ENCODE measurements at regions of chrX and their contacts with region 1.

Region 1: GRCh38 chrX:1657367-1658070 is 42.7 kb downstream of the ASMT start:
- DNase-seq: peak; percentile 80
- ATAC-seq: peak; percentile 67
- H3K4me3 Mint-ChIP-seq: peak overlapping the region; percentile 93
- H3K27ac Mint-ChIP-seq: peak overlapping the region; percentile 98
- H3K4me1 Mint-ChIP-seq: peaks cover 23% of the 10 kb centered on the region
- H3K27me3 Mint-ChIP-seq: no peaks in the 10 kb centered on the region

Region 2: DNA sequence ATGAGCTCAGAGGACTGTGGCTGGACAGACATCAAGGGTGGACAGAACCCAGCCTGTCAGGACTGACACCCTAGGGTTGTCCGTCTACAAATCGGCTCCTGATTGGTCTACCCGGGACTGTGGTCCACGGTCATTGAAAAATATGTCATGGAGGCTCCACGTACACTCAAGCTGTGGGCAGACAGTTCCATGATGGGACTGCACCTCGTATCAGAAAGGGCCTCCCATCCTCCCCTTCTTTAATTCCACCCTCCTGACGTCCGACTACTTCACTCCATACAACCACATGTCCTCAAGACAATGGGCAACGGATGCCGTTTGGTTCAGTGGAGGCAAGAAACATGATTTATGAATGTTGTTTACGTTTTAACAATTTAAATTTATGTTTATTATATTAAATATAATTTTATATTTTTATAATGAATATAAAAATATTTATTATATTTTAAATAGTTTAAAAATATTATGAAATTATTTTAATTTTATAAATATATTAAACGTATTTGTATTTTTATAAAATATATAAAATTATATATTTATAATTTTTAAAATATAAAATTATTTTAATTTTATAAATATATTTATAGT is 1084.9 kb before region 1 on chrX:
- CTCF ChIA-PET with region 1: no interaction called
- POLR2A ChIA-PET with region 1: no interaction called
- intact Hi-C with region 1: loop called in 1 of 2 experiments (anchors 5 kb)
- DNase-seq: no peak
- ATAC-seq: peak; percentile 24
- H3K4me3 Mint-ChIP-seq: no peak overlapping the region
- H3K27ac Mint-ChIP-seq: no peak overlapping the region
- H3K4me1 Mint-ChIP-seq: no peaks in the 10 kb centered on the region
- H3K27me3 Mint-ChIP-seq: no peaks in the 10 kb centered on the region

Region 3: GRCh38 chrX:1516596-1517104 is 140.9 kb before region 1 on chrX:
- CTCF ChIA-PET with region 1: no interaction called
- POLR2A ChIA-PET with region 1: no interaction called
- intact Hi-C with region 1: no loop called
- DNase-seq: no peak
- ATAC-seq: no peak
- H3K4me3 Mint-ChIP-seq: no peak overlapping the region
- H3K27ac Mint-ChIP-seq: peak overlapping the region; percentile 49
- H3K4me1 Mint-ChIP-seq: peaks cover 44% of the 10 kb centered on the region
- H3K27me3 Mint-ChIP-seq: no peaks in the 10 kb centered on the region

Region 4: DNA sequence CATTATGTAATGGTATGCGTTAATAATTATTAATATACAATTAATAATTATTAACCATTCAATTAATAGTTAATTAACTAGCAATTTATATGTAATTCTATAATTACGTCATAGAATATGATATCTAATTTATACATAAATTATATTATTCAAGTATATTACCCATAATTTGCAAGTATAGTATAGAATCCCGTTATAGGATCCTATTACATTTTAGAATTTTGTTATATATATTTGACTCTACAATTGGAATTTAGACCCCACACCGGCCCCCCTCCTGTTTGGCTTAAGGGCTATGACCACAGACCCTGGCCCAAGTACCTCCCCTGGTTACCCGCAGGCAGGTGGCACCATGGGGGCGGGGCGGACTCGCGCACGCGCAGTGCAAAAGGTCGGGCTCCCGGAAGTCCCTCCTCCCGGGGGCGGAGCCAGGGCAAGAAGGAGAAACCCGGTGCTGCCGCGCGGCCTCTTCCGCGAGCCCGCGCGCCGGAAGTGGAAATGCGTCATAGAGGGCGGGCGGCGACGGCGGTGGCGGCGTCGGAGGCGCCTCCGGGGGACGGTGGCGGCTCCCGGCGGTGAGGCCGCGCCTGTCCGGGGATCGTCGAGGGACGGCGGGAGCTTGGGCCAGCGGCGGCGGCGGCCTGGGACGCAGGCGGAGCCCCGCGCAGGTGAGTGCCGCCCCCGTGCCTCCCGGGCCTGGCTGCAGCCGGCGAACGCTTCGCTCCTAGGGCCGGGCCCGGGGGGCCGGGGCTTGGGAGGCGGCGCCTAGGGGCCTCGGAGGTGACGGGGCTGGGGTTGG is 66.2 kb before region 1 on chrX and contains the start of gene AKAP17A:
- CTCF ChIA-PET with region 1: no interaction called
- POLR2A ChIA-PET with region 1: no interaction called
- intact Hi-C with region 1: loop called (anchors 1 to 5 kb)
- DNase-seq: peak; percentile 99
- ATAC-seq: peak; percentile 91
- H3K4me3 Mint-ChIP-seq: peak within 1 kb of the TSS; percentile 91
- H3K27ac Mint-ChIP-seq: peak within 1 kb of the TSS; percentile 89
- H3K4me1 Mint-ChIP-seq: peaks cover 27% of the 10 kb centered on the region
- H3K27me3 Mint-ChIP-seq: no peaks in the 10 kb centered on the region
- total RNA-seq, gene AKAP17A: 49.7 to 51.2 TPM

Region 5: DNA sequence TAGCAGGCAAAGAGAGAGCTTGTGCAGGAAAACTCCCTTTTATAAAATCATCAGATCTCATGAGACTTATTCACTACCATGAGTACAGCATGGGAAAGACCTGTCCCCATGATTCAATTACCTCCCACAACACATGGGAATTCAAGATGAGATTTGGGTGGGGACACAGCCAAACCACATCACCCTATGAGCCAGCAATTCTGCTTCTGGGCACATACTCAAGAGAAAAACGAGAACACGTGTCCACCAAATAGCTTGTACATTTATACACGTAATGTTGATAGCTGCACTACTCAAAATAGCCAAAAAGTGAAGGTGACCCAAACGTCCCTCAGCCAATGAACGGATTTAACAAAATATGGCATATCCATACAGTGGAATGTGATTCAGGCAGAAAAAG is 937.7 kb after region 1 on chrX:
- CTCF ChIA-PET with region 1: no interaction called
- POLR2A ChIA-PET with region 1: no interaction called
- intact Hi-C with region 1: loop called (anchors 1 kb)
- DNase-seq: no peak
- ATAC-seq: no peak
- H3K4me3 Mint-ChIP-seq: no peak overlapping the region
- H3K27ac Mint-ChIP-seq: no peak overlapping the region
- H3K4me1 Mint-ChIP-seq: no peaks in the 10 kb centered on the region
- H3K27me3 Mint-ChIP-seq: no peaks in the 10 kb centered on the region

Region 6: GRCh38 chrX:2690856-2691542 is 1033.5 kb after region 1 on chrX and contains the start of gene CD99:
- CTCF ChIA-PET with region 1: no interaction called
- POLR2A ChIA-PET with region 1: no interaction called
- intact Hi-C with region 1: loop called (anchors 5 to 10 kb)
- DNase-seq: peak; percentile 91
- ATAC-seq: peak; percentile 79
- H3K4me3 Mint-ChIP-seq: peak within 1 kb of the TSS; percentile 95
- H3K27ac Mint-ChIP-seq: peak within 1 kb of the TSS; percentile 100
- H3K4me1 Mint-ChIP-seq: peaks cover 34% of the 10 kb centered on the region
- H3K27me3 Mint-ChIP-seq: no peaks in the 10 kb centered on the region
- total RNA-seq, gene CD99: 169 to 216 TPM

Measured in activated CD4-positive, alpha-beta T cell treated with anti-CD3 and anti-CD28 coated beads for 36 hours (primary cell).